Activated naive CD8-positive, alpha-beta T cell treated with anti-CD3 and anti-CD28 coated beads, Interleukin-2, amount 10 ng/mL, durations not matched to agents 7 days and 5 days (primary cell): ENCODE measurements at regions of chr12 and their contacts with region 1.

Region 1: GRCh38 chr12:685388-685787 is 22.1 kb upstream of the NINJ2 start:
- DNase-seq: peak; percentile 72
- ATAC-seq: peak; percentile 97
- H3K4me3 Mint-ChIP-seq: peak overlapping the region; percentile 70
- H3K27ac Mint-ChIP-seq: peak overlapping the region; percentile 93
- H3K4me1 Mint-ChIP-seq: peaks cover 28% of the 10 kb centered on the region
- H3K27me3 Mint-ChIP-seq: no peaks in the 10 kb centered on the region

Region 2: DNA sequence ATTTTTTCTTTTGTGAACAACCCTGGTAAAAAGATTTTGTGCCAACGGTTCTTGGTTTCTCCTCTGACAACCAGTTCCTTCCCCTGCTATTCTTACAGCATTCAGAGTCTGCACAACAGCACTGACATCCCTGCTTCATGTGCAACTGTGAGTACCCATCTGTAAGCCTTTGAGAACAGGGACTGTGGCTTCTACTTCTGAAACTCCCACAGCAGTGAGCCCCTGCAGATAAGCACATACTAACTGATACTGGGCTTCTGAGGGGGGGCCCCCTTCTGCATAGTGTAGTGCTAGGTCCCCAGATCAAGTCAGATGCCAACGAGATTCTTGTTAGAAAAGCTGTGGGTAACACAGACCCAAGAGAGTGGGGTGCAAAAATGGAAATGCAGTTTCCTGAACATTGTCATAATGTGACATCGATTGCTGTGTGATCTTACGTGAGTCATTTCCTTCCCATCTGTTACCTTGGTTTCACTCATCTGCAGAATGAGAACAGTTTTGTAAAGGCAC is 11.1 kb before region 1 on chr12:
- POLR2A ChIA-PET with region 1: interaction called, 54 read pairs
- DNase-seq: peak; percentile 63
- ATAC-seq: peak; percentile 96
- H3K4me3 Mint-ChIP-seq: peak overlapping the region; percentile 84
- H3K27ac Mint-ChIP-seq: peak overlapping the region; percentile 99
- H3K4me1 Mint-ChIP-seq: peaks cover 52% of the 10 kb centered on the region
- H3K27me3 Mint-ChIP-seq: no peaks in the 10 kb centered on the region

Region 3: DNA sequence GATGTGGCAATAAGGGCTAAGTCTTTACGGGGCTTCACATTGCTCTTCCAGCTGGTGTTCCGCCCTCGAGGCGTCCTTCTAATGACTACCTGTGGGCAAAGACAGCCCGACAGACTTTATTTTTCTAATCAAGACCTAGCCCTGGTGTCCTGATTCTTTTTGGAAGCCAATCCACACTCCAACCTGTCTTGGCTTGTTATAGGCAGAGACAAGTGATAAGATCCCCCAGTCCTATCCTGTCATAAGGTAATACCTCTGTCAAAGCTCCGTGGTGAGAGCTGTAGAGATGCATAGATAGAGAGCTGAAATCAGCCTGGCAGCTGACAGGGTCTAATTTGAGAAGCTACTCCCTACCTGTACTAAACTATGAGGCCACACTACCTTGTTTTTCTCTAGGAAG is 55.5 kb after region 1 on chr12:
- POLR2A ChIA-PET with region 1: interaction called, 10 read pairs
- DNase-seq: no peak
- ATAC-seq: no peak
- H3K4me3 Mint-ChIP-seq: no peak overlapping the region
- H3K27ac Mint-ChIP-seq: no peak overlapping the region
- H3K4me1 Mint-ChIP-seq: peaks cover 27% of the 10 kb centered on the region
- H3K27me3 Mint-ChIP-seq: no peaks in the 10 kb centered on the region